GM12878 (cell line): ENCODE measurements at regions of chr2 and their contacts with region 1.

Region 1: GRCh38 chr2:54634564-54635511 is 88.6 kb upstream of the EML6 start:
- DNase-seq: peak; percentile 93
- ATAC-seq: peak; percentile 81
- H3K4me3 ChIP-seq: peak overlapping the region; percentile 38
- H3K27ac ChIP-seq: peak overlapping the region; percentile 95
- H3K4me1 ChIP-seq: peaks cover 57% of the 10 kb centered on the region
- H3K27me3 ChIP-seq: no peaks in the 10 kb centered on the region
- CTCF ChIP-seq: no peak
- EP300 ChIP-seq: peak; percentile 81 to 84; a peak in 2 of 4 replicates
- POLR2A ChIP-seq: peak; percentile 52
- RAD21 ChIP-seq: 0 out of 2 replicates have a peak, but pooled peaks have one; percentile 0

Region 2: GRCh38 chr2:54106631-54107454 is 528.0 kb before region 1 on chr2:
- CTCF ChIA-PET with region 1: interaction called, 3 read pairs
- POLR2A ChIA-PET with region 1: no interaction called
- RAD21 ChIA-PET with region 1: interaction called, 3 read pairs
- SMC1A ChIA-PET with region 1: interaction called, 3 read pairs
- in situ Hi-C with region 1: no loop called
- intact Hi-C with region 1: loop called (anchors 10 kb)
- DNase-seq: no peak
- ATAC-seq: peak; percentile 83
- H3K4me3 ChIP-seq: no peak overlapping the region
- H3K27ac ChIP-seq: no peak overlapping the region
- H3K4me1 ChIP-seq: no peaks in the 10 kb centered on the region
- H3K27me3 ChIP-seq: no peaks in the 10 kb centered on the region
- CTCF ChIP-seq: peak; percentile 59 to 73 (median 60); a peak in 5 of 6 replicates
- EP300 ChIP-seq: no peak
- POLR2A ChIP-seq: no peak
- RAD21 ChIP-seq: peak; percentile 73

Region 3: DNA sequence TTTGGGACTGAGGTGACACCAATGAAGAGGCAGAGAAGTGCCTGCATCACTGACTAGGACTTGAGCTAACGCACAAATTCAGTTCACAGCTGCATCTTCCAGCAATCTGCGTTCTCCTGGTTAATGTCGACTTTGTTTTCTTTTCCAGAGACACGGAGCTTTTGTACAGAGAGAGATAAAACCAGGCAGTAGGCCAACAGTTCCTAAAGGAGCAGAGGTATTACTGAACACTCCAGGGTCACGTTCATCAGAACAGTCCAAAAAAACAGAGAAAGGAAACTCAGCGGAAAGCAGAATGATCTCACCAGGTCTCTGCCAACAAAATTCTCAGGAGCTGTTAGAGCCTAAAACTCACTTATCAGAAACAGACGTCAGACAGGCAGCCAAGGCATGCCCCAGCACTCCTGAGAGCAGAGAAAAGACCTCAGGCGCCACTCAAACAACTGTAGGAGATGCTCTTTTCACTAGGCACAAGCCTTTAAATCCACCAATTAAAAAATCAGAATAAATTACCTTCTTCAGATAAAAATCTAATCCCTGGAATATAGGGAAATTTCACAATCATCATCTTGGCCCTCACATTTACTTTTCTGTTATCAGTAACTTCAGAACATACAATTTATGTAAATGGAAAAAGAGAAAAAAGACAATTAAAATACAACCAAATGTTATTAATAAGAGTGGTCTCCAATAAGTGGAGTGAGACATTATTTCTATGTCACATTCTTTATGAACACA is 274.6 kb before region 1 on chr2:
- CTCF ChIA-PET with region 1: no interaction called
- POLR2A ChIA-PET with region 1: no interaction called
- RAD21 ChIA-PET with region 1: no interaction called
- SMC1A ChIA-PET with region 1: no interaction called
- in situ Hi-C with region 1: no loop called
- intact Hi-C with region 1: no loop called
- DNase-seq: no peak
- ATAC-seq: no peak
- H3K4me3 ChIP-seq: no peak overlapping the region
- H3K27ac ChIP-seq: no peak overlapping the region
- H3K4me1 ChIP-seq: no peaks in the 10 kb centered on the region
- H3K27me3 ChIP-seq: no peaks in the 10 kb centered on the region; a peak in 2 of 4 replicates
- CTCF ChIP-seq: no peak
- EP300 ChIP-seq: no peak
- POLR2A ChIP-seq: no peak
- RAD21 ChIP-seq: no peak

Region 4: GRCh38 chr2:54565547-54565946 is 69.3 kb before region 1 on chr2:
- CTCF ChIA-PET with region 1: interaction called, 9 read pairs
- POLR2A ChIA-PET with region 1: interaction called, 11 read pairs
- RAD21 ChIA-PET with region 1: interaction called, 45 read pairs
- SMC1A ChIA-PET with region 1: interaction called, 30 read pairs
- in situ Hi-C with region 1: no loop called
- intact Hi-C with region 1: loop called (anchors 2 kb)
- DNase-seq: no peak
- ATAC-seq: no peak
- H3K4me3 ChIP-seq: 0 out of 2 replicates have a peak overlapping the region, but pooled peaks have one; percentile 43
- H3K27ac ChIP-seq: peak overlapping the region; percentile 62; the same call in 1 of the 2 replicates
- H3K4me1 ChIP-seq: peaks cover 41% of the 10 kb centered on the region
- H3K27me3 ChIP-seq: no peaks in the 10 kb centered on the region
- CTCF ChIP-seq: no peak
- EP300 ChIP-seq: no peak
- POLR2A ChIP-seq: no peak
- RAD21 ChIP-seq: no peak

Region 5: GRCh38 chr2:54579684-54580620 is 54.9 kb before region 1 on chr2:
- CTCF ChIA-PET with region 1: interaction called, 16 read pairs
- POLR2A ChIA-PET with region 1: interaction called, 40 read pairs
- RAD21 ChIA-PET with region 1: interaction called, 56 read pairs
- SMC1A ChIA-PET with region 1: interaction called, 86 read pairs
- in situ Hi-C with region 1: no loop called
- intact Hi-C with region 1: loop called (anchors 1 kb)
- DNase-seq: peak; percentile 89
- ATAC-seq: peak; percentile 82
- H3K4me3 ChIP-seq: peak overlapping the region; percentile 45
- H3K27ac ChIP-seq: peak overlapping the region; percentile 95
- H3K4me1 ChIP-seq: peaks cover 81% of the 10 kb centered on the region
- H3K27me3 ChIP-seq: no peaks in the 10 kb centered on the region
- CTCF ChIP-seq: no peak
- EP300 ChIP-seq: 0 out of 4 replicates have a peak, but pooled peaks have one; percentile 39 to 69
- POLR2A ChIP-seq: no peak
- RAD21 ChIP-seq: peak; percentile 13; the same call in 1 of the 2 replicates

Region 6: GRCh38 chr2:54624591-54625071 is 10.2 kb before region 1 on chr2:
- CTCF ChIA-PET with region 1: interaction called, 4 read pairs
- POLR2A ChIA-PET with region 1: interaction called, 11 read pairs
- RAD21 ChIA-PET with region 1: interaction called, 6 read pairs
- SMC1A ChIA-PET with region 1: interaction called, 16 read pairs
- in situ Hi-C with region 1: no loop called
- intact Hi-C with region 1: no loop called
- DNase-seq: no peak
- ATAC-seq: no peak
- H3K4me3 ChIP-seq: no peak overlapping the region
- H3K27ac ChIP-seq: no peak overlapping the region
- H3K4me1 ChIP-seq: no peaks in the 10 kb centered on the region
- H3K27me3 ChIP-seq: no peaks in the 10 kb centered on the region
- CTCF ChIP-seq: no peak
- EP300 ChIP-seq: no peak
- POLR2A ChIP-seq: no peak
- RAD21 ChIP-seq: no peak

Region 7: DNA sequence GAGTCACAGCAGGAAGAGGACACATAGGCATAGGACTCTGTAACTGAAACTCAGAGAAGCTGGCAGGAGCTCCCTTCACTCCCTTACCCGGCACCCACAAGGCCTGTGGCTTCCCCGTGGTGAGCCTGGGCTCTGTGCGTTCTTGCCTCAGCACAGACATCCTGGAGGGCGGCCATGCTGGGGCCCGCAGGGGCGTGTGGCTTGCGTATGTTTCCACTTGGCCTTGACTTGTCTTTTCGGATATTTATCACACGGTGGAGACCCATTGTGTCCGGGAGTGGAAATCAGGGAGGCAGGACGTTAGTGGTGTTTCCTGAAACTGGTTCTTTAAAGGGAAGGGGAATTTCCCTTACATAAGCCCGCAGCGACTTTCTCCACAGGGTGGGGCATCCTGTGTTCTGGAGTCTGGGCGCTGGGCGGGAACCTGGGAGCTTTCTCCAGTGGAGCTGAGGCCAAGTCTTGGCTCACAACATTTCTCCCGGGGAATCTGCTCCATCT is 38.7 kb after region 1 on chr2:
- CTCF ChIA-PET with region 1: no interaction called
- POLR2A ChIA-PET with region 1: interaction called, 8 read pairs
- RAD21 ChIA-PET with region 1: interaction called, 22 read pairs
- SMC1A ChIA-PET with region 1: interaction called, 13 read pairs
- in situ Hi-C with region 1: no loop called
- intact Hi-C with region 1: no loop called
- DNase-seq: no peak
- ATAC-seq: peak; percentile 76
- H3K4me3 ChIP-seq: no peak overlapping the region
- H3K27ac ChIP-seq: peak overlapping the region; percentile 70
- H3K4me1 ChIP-seq: peaks cover 20% of the 10 kb centered on the region
- H3K27me3 ChIP-seq: no peaks in the 10 kb centered on the region
- CTCF ChIP-seq: no peak
- EP300 ChIP-seq: no peak
- POLR2A ChIP-seq: no peak
- RAD21 ChIP-seq: no peak